ENCODE measurements at regions of chr22 and their contacts with region 1.

Region 1: DNA sequence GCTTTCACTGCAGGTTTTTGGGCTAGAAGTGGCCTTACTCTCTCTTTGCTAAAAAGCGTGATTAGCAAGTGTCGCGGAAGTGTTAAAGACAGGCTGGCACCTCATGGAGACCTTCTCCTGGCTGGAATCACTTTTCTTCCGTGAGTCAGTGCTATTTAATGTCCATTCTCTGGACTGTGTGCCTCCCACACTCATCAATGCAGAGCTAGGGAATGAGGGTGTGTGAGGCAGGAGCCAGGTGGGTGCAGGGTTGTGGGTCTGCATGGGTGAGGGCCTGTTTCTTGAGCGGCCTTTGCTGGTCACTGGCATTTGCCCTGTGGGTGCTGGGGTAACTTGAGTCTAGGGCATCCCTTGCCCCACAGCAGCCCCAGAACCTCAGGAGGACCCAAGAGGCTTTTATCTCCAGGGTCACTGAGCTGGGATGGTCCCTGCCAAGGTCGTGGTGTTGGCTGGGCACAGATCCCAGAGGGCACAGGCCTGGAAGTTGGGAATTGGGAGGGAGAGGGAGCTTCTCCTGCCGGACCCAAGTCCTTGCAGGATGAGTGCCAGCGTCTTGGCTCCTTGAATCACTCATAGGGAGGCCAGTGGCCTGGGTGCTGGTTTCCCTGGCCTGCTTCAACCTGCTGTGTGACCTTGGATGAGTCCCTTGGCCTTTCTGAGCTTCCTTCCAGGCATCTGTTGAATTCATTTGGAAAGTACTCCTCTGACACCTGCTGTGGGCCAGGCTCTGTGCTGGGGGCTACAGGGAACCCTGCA is 30.0 kb downstream of the KIAA1671 start:
- DNase-seq: no peak
- ATAC-seq: no peak

Region 2: GRCh38 chr22:25014896-25015755 is 32.6 kb after region 1 on chr22:
- intact Hi-C with region 1: loop called (anchors 5 kb)
- DNase-seq: no peak
- ATAC-seq: no peak

Measured in Right ventricle myocardium superior (tissue), 1 donor.